ENCODE measurements at regions of chr6 and their contacts with region 1.

Region 1: DNA sequence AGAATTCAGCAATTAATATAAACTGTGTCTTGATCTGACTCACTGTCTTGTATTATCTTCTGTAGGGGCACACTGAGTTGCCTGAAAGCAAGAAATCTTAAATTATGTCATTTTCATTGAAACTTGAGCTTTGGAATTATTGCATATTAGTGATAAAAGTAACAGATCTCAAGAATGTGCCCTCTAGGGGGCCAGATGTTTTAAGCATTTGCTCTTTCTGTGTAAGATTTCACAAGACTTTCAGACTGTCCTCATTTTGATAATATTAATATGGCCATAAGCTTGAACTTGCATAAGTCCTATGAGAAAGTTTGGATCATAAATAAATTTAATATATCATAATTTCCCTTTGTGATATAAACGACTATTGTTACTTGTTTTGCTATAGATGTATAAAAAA is 55.5 kb upstream of the MYO6 start:
- DNase-seq: peak; percentile 0 to 27 (median 7)
- H3K4me3 ChIP-seq: no peak overlapping the region
- H3K27ac ChIP-seq: no peak overlapping the region
- H3K4me1 ChIP-seq: no peaks in the 10 kb centered on the region
- H3K27me3 ChIP-seq: no peaks in the 10 kb centered on the region

Region 2: GRCh38 chr6:75711173-75711572 is 17.6 kb after region 1 on chr6:
- CTCF ChIA-PET with region 1: interaction called, 12 read pairs
- POLR2A ChIA-PET with region 1: no interaction called
- DNase-seq: no peak
- H3K4me3 ChIP-seq: no peak overlapping the region
- H3K27ac ChIP-seq: no peak overlapping the region
- H3K4me1 ChIP-seq: no peaks in the 10 kb centered on the region
- H3K27me3 ChIP-seq: no peaks in the 10 kb centered on the region